Gastrocnemius medialis (tissue), 4 donors: ENCODE measurements at regions of chrX and their contacts with region 1.

Region 1: DNA sequence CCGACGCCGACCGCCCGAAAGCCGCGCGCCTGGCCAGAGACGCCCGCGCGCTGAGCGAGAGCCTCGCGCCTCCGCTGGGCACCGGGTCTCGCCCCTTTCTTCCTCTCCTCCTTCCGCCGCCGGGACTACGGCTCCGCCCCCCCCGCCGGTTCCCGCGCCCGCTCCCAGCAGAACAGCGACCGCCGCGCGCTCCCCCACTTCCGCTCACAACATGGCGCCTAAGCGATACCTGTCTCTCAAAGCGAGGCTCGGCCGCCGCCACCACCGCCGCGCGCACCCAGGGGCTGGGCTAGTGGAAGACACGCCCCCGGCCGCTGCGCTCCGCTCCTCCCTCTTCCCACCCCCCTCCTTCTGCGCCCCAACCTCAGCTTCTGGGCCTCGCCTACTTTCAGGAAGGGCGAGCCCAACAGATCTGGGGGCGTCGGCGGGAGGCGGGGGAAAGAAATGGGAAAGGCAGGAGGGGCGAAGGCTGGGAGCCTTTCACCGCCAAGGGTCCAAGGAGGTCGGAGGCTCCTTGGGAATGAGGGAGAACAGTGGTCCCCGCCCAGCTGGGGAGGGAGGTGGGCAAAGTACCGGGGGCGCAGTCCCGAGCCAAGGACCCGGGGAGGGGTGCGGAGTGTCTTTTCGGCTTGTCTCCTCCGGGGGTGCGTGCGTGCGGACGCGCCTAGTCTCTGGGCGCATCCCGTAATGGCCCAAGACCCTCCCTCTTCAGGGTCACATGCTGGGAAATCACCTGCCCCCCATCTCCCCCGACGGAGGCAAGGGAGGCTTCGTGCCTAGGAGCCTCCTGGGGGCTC is at the start of gene RPS6KA3:
- DNase-seq: peak; percentile 88 to 91
- ATAC-seq: peak; percentile 71 to 78
- H3K4me3 ChIP-seq: peak within 1 kb of the TSS; percentile 71 to 82 (median 74)
- H3K27ac ChIP-seq: peak within 1 kb of the TSS; percentile 92 to 95 (median 93)
- H3K4me1 ChIP-seq: peaks cover 13 to 24% of the 10 kb centered on the region in 2 donors
- H3K27me3 ChIP-seq: no peaks in the 10 kb centered on the region
- CTCF ChIP-seq: no peak
- POLR2A ChIP-seq: peak; percentile 84 to 89
- total RNA-seq, gene RPS6KA3: 53.1 to 91.0 (median 66.0) TPM

Region 2: DNA sequence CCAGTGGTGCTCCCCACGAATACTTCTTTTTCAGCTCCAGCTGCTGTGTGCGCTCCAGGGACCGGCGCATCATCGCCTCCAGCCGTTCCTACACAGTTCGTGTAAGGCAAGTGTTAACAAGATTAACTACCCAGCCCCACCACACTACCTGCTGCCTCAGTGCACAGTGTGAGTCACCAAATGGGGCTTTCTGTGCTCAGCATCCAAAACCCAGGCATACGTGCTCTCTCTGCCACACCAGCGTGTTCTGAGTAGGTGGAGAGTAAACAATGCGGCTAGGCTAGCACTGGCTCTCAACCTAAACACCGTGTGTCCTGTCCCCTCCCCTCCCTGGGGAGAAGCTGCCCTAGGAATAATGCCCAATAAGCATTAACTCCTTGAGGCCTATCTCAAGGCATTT is 210.3 kb before region 1 on chrX:
- in situ Hi-C with region 1: no loop called
- intact Hi-C with region 1: no loop called
- DNase-seq: no peak
- ATAC-seq: no peak
- H3K4me3 ChIP-seq: no peak overlapping the region
- H3K27ac ChIP-seq: no peak overlapping the region
- H3K4me1 ChIP-seq: no peaks in the 10 kb centered on the region
- H3K27me3 ChIP-seq: no peaks in the 10 kb centered on the region
- CTCF ChIP-seq: no peak
- POLR2A ChIP-seq: no peak

Region 3: DNA sequence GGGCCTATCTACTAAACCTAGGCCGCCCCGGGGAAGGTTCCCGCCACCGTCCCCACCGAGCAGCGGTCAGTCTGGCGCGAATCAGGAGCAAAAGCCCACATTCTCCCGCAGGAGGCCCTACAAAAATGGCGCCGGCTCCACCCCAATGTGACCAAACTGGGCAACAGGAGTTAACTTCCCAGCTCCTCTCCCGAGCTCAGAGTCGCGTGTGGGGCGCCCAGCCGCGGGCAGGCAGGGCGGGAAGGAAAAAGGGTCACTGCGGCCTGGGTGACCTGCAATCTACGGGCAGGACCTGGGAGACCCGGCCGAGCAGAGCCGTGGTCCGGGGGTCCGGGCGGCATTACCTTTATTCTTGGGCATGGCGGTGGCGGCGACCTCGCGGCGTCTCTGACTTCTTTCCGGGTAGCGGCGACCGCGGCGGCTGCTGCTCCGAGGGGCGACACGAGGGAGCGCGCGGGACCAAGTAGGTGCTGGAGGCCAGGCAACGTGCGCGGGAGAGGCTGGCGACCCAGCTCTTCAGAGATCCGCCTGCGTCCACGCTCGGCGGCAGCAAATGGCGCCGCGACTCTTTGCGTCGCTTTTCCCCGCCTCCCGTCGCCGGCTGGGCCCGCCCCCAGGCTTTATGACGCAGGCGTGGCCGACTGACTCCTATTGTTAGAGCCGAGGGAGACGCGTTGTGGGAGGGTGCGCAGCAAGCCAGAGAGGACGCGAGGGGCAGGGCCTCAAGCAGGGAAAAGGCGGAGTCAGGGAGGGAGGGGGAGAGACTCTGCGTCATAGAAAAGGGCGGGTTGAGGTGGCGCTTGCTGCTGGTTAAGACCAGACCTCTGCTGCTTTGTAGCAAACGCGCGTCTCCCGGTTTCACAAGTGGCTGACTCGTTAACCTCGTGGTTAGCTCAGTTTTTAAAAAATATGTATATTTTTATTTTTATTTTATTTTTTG is 125.5 kb before region 1 on chrX and contains the start of gene EIF1AX:
- in situ Hi-C with region 1: no loop called
- intact Hi-C with region 1: loop called (anchors 5 kb)
- DNase-seq: peak; percentile 94 to 97
- ATAC-seq: peak; percentile 97
- H3K4me3 ChIP-seq: peak within 1 kb of the TSS; percentile 71 to 98 (median 90)
- H3K27ac ChIP-seq: peak within 1 kb of the TSS; percentile 92 to 97 (median 95)
- H3K4me1 ChIP-seq: peaks cover 13 to 21% of the 10 kb centered on the region in 2 donors
- H3K27me3 ChIP-seq: no peaks in the 10 kb centered on the region
- CTCF ChIP-seq: no peak
- POLR2A ChIP-seq: peak; percentile 97 to 98
- total RNA-seq, gene EIF1AX: 61.0 to 124 (median 88.9) TPM

Region 4: GRCh38 chrX:20217275-20217674 is 49.7 kb before region 1 on chrX:
- in situ Hi-C with region 1: no loop called
- intact Hi-C with region 1: loop called (anchors 2 kb)
- DNase-seq: no peak
- ATAC-seq: no peak
- H3K4me3 ChIP-seq: peak overlapping the region; percentile 32 to 42 (median 36)
- H3K27ac ChIP-seq: peak overlapping the region; percentile 68 to 86 (median 75)
- H3K4me1 ChIP-seq: peaks cover 8 to 29% of the 10 kb centered on the region in 2 donors
- H3K27me3 ChIP-seq: no peaks in the 10 kb centered on the region
- CTCF ChIP-seq: no peak
- POLR2A ChIP-seq: no peak

Region 5: GRCh38 chrX:20309806-20310205 is 42.8 kb after region 1 on chrX:
- in situ Hi-C with region 1: no loop called
- intact Hi-C with region 1: loop called (anchors 5 kb)
- DNase-seq: no peak
- ATAC-seq: no peak
- H3K4me3 ChIP-seq: no peak overlapping the region
- H3K27ac ChIP-seq: peak overlapping the region in 2 of 4 donors; percentile 30 to 83
- H3K4me1 ChIP-seq: peaks cover 8% of the 10 kb centered on the region in 2 donors
- H3K27me3 ChIP-seq: no peaks in the 10 kb centered on the region
- CTCF ChIP-seq: no peak
- POLR2A ChIP-seq: no peak

Region 6: GRCh38 chrX:20362268-20363267 is 95.6 kb after region 1 on chrX:
- in situ Hi-C with region 1: no loop called
- intact Hi-C with region 1: loop called (anchors 2 kb)
- DNase-seq: peak; percentile 24 to 41
- ATAC-seq: peak; percentile 89 to 94
- H3K4me3 ChIP-seq: no peak overlapping the region
- H3K27ac ChIP-seq: peak overlapping the region; percentile 78 to 87 (median 82)
- H3K4me1 ChIP-seq: peaks cover 20 to 24% of the 10 kb centered on the region in 2 donors
- H3K27me3 ChIP-seq: no peaks in the 10 kb centered on the region
- CTCF ChIP-seq: no peak
- POLR2A ChIP-seq: no peak

Region 7: GRCh38 chrX:20383477-20383876 is 116.5 kb after region 1 on chrX:
- in situ Hi-C with region 1: no loop called
- intact Hi-C with region 1: no loop called
- DNase-seq: no peak
- ATAC-seq: no peak
- H3K4me3 ChIP-seq: no peak overlapping the region
- H3K27ac ChIP-seq: peak overlapping the region in 1 of 4 donors; percentile 31
- H3K4me1 ChIP-seq: peaks cover 0 to 8% of the 10 kb centered on the region in 2 donors
- H3K27me3 ChIP-seq: no peaks in the 10 kb centered on the region
- CTCF ChIP-seq: no peak
- POLR2A ChIP-seq: no peak

Region 8: DNA sequence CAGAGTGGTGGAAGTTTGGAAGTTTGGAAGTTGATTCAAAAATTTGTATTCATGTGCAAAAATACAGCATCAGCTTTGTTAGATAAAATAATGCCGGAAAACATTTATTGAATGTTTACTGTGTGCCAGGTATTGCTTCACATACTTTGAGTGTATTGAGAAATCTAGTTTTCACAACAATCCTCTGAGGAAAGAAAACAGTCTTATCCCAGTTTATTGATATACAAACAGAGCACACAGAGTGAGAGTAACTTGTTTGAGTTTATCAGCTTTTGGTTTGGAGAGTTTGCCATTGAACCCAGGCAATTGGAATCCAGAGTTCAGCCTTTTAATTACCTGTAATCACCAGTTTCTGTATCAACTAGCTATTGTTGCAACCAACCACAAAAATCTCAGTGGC is 126.9 kb after region 1 on chrX:
- in situ Hi-C with region 1: no loop called
- intact Hi-C with region 1: no loop called
- DNase-seq: no peak
- ATAC-seq: no peak
- H3K4me3 ChIP-seq: no peak overlapping the region
- H3K27ac ChIP-seq: no peak overlapping the region
- H3K4me1 ChIP-seq: no peaks in the 10 kb centered on the region
- H3K27me3 ChIP-seq: no peaks in the 10 kb centered on the region
- CTCF ChIP-seq: no peak
- POLR2A ChIP-seq: no peak